MCF 10A (cell line): ENCODE measurements at regions of chr5 and their contacts with region 1.

Region 1: DNA sequence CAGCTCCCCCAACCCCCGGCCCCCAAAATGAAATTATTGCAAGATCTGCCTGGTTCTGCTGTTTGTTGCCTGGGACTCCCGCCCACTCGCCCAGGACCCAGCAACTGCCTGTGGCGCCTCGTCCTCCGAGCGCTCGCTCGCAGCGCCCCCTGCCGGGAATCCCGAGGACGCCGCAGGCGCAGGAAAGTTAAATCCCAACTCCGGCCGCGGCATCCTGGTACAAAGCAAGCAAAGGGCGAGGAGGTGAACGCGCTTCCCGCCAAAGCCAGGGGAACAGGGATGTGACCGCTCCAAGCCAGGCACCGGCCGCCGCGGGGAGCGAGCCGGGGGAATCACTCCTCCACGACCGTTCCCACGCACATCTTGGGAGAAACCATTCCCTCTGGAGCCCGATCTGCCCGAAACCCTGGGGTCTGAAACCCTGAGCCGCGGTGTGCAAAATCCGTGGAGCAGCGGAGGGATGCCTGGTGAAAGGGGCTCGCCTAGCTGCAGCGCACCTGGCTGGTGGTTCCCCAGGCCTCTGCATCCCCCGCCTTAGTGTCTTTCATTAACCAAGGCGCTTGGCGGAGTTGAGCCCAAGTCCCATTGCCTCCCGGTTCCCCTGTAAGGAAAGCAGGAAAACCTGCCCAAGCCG is 1.3 kb downstream of the SEMA5A start:
- DNase-seq: peak; percentile 76
- H3K4me3 Mint-ChIP-seq: peak overlapping the region; percentile 69
- H3K27ac Mint-ChIP-seq: peak overlapping the region; percentile 27
- H3K4me1 Mint-ChIP-seq: peaks cover 7% of the 10 kb centered on the region
- H3K27me3 Mint-ChIP-seq: no peaks in the 10 kb centered on the region
- CTCF ChIP-seq: peak; percentile 93

Region 2: GRCh38 chr5:9173281-9174048 is 371.2 kb before region 1 on chr5:
- CTCF ChIA-PET with region 1: no interaction called
- POLR2A ChIA-PET with region 1: no interaction called
- intact Hi-C with region 1: no loop called
- DNase-seq: peak; percentile 91
- H3K4me3 Mint-ChIP-seq: no peak overlapping the region
- H3K27ac Mint-ChIP-seq: peak overlapping the region; percentile 29
- H3K4me1 Mint-ChIP-seq: peaks cover 35% of the 10 kb centered on the region
- H3K27me3 Mint-ChIP-seq: no peaks in the 10 kb centered on the region
- CTCF ChIP-seq: no peak

Region 3: DNA sequence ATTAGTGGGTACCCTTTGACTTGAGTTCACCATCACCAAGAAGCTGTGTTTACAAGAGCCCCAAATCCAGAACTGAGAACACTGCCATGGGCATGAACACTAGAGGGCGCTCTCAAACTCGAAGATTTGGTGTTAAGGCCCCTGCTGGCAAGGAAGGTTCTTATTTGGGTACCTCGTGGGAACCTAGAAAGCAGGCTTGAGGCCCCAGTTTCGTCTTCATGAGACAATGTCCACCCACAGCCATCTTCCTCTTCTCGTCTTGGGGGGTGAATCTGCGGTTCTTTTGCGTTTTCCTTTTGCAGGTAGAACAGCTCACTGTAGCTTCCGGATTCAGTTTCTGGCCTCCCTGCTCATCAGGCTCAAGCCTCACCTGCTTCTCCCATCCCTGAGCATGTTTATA is 182.8 kb before region 1 on chr5:
- CTCF ChIA-PET with region 1: interaction called, 16 read pairs
- POLR2A ChIA-PET with region 1: no interaction called
- intact Hi-C with region 1: loop called (anchors 1 kb)
- DNase-seq: peak; percentile 85
- H3K4me3 Mint-ChIP-seq: no peak overlapping the region
- H3K27ac Mint-ChIP-seq: no peak overlapping the region
- H3K4me1 Mint-ChIP-seq: no peaks in the 10 kb centered on the region
- H3K27me3 Mint-ChIP-seq: no peaks in the 10 kb centered on the region
- CTCF ChIP-seq: peak; percentile 84

Region 4: DNA sequence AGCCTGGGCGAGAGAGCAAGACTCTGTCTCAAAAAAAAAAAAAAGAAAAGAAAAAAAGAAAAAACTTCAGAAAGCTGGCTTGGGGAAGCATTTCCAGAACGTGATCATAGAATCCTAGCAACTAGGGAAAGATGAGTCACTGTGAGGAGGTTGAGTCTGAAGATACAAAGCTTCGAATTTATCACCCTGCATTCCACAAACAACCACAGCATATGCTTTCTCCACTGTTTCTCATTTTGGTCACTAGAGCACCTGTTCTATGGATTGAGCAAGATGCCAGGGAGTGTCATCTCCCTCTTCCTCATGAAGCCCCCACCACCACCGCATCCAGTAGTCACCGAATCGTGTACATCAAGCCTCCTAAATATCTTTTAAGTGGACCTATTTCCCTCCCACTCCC is 36.6 kb before region 1 on chr5:
- CTCF ChIA-PET with region 1: no interaction called
- POLR2A ChIA-PET with region 1: no interaction called
- intact Hi-C with region 1: no loop called
- DNase-seq: no peak
- H3K4me3 Mint-ChIP-seq: no peak overlapping the region
- H3K27ac Mint-ChIP-seq: no peak overlapping the region
- H3K4me1 Mint-ChIP-seq: no peaks in the 10 kb centered on the region
- H3K27me3 Mint-ChIP-seq: no peaks in the 10 kb centered on the region
- CTCF ChIP-seq: no peak

Region 5: DNA sequence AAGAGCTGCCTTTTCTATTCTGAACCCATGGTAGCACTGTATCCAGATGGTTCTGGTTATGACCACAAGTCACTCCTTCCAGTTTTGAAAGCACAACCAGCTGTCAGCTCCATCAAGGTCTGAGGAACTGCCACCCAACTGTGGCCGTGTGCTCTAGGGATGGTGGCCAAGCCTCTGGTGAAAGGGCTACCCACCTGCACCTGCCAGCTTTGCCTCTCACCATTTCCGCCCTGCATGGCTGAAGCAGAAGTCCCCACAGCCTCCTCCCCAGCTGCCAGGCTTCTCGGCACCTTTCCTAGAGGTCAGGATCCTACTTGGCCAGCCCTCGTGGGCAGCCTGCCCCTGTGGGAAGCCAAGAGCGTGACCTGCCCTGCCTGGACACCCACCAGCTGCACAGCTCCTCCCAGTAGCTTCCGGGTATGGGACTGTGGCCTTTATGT is 15.6 kb before region 1 on chr5:
- CTCF ChIA-PET with region 1: interaction called, 14 read pairs
- POLR2A ChIA-PET with region 1: no interaction called
- intact Hi-C with region 1: no loop called
- DNase-seq: no peak
- H3K4me3 Mint-ChIP-seq: no peak overlapping the region
- H3K27ac Mint-ChIP-seq: no peak overlapping the region
- H3K4me1 Mint-ChIP-seq: no peaks in the 10 kb centered on the region
- H3K27me3 Mint-ChIP-seq: no peaks in the 10 kb centered on the region
- CTCF ChIP-seq: no peak

Region 6: GRCh38 chr5:10030210-10030831 is 485.7 kb after region 1 on chr5:
- CTCF ChIA-PET with region 1: no interaction called
- POLR2A ChIA-PET with region 1: no interaction called
- intact Hi-C with region 1: loop called (anchors 5 kb)
- DNase-seq: peak; percentile 71
- H3K4me3 Mint-ChIP-seq: no peak overlapping the region
- H3K27ac Mint-ChIP-seq: no peak overlapping the region
- H3K4me1 Mint-ChIP-seq: no peaks in the 10 kb centered on the region
- H3K27me3 Mint-ChIP-seq: no peaks in the 10 kb centered on the region
- CTCF ChIP-seq: peak; percentile 35